ENCODE measurements at regions of chr6 and their contacts with region 1.

Region 1: GRCh38 chr6:134480593-134480992 is 162.7 kb upstream of the SGK1 start:
- DNase-seq: peak in 1 of 2 donors; percentile 66
- ATAC-seq: peak; percentile 87 to 91 (median 89)
- H3K4me3 ChIP-seq: no peak overlapping the region
- H3K27ac ChIP-seq: peak overlapping the region; percentile 62
- H3K4me1 ChIP-seq: peaks cover 29% of the 10 kb centered on the region
- H3K27me3 ChIP-seq: no peaks in the 10 kb centered on the region
- CTCF ChIP-seq: no peak

Region 2: DNA sequence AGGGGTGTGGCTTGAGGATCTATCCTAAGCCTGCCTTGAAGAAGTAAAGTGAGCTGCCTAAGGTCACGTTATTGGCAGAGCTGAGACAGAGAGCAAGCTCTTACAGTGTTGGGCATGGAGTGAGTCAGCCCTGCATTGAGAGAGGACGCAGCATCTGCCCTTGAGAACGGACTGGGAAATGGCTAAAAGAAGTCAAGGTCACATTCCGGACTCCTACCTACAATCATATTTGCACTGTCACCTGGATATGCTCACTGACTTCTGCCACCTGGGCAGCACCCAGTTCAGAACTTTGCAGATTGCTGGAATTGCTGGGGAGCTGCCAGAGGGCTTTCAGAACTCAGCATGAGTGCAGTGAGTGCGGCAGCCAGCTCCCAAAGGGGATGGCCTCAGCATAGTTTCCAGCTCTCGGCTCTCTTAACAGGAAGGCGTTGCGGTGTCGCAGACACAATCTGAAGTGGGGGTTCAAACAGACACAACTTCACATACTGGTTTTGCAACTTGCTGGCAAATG is 36.6 kb after region 1 on chr6:
- intact Hi-C with region 1: loop called in 1 of 2 experiments (anchors 5 kb)
- DNase-seq: peak; percentile 67 to 73
- ATAC-seq: peak; percentile 97 to 99 (median 98)
- H3K4me3 ChIP-seq: peak overlapping the region; percentile 24
- H3K27ac ChIP-seq: peak overlapping the region; percentile 69
- H3K4me1 ChIP-seq: peaks cover 7% of the 10 kb centered on the region
- H3K27me3 ChIP-seq: no peaks in the 10 kb centered on the region
- CTCF ChIP-seq: no peak

Region 3: DNA sequence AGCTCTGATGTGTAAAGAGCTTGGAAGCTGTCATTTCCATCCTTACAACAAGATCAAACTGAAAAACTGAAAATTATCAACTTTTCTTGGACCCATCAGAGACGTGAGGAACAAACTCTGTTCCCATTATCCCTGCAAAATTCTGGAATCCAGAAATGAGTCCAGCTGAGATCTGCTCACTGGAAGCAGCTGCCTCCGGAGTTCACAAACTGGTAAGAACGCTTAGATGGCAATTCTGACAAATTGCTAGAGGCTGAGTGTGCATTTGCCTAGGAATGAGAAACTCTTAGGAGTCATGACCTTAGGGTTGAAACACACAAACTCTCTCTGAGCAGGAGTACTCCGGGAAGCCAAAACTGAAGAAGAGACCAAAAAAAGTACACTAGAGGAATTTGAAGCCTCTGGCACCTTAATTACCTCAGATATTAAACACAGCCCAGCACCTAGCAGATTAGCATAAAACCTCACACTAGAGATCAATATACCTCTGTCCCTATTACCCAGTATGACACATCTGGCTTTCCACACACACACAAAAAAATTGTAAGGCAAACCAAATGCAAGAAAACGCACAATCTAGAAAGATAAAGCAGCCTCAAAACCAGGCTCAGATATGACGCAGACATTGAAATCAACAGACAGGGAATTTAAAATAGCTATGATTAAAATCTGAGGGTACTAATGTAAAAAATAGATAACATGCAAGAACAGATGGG is 70.8 kb after region 1 on chr6:
- intact Hi-C with region 1: no loop called
- DNase-seq: no peak
- ATAC-seq: peak in 1 of 4 donors; percentile 35
- H3K4me3 ChIP-seq: no peak overlapping the region
- H3K27ac ChIP-seq: no peak overlapping the region
- H3K4me1 ChIP-seq: peaks cover 7% of the 10 kb centered on the region
- H3K27me3 ChIP-seq: no peaks in the 10 kb centered on the region
- CTCF ChIP-seq: no peak

Measured in psoas muscle (tissue), 8 donors.